ENCODE measurements at regions of chr14 and their contacts with region 1.

Region 1: GRCh38 chr14:93543766-93544165 is 113.0 kb downstream of the UNC79 start:
- DNase-seq: peak; percentile 5
- H3K4me3 ChIP-seq: no peak overlapping the region
- H3K27ac ChIP-seq: no peak overlapping the region
- H3K4me1 ChIP-seq: no peaks in the 10 kb centered on the region
- H3K27me3 ChIP-seq: no peaks in the 10 kb centered on the region
- CTCF ChIP-seq: peak; percentile 51

Region 2: DNA sequence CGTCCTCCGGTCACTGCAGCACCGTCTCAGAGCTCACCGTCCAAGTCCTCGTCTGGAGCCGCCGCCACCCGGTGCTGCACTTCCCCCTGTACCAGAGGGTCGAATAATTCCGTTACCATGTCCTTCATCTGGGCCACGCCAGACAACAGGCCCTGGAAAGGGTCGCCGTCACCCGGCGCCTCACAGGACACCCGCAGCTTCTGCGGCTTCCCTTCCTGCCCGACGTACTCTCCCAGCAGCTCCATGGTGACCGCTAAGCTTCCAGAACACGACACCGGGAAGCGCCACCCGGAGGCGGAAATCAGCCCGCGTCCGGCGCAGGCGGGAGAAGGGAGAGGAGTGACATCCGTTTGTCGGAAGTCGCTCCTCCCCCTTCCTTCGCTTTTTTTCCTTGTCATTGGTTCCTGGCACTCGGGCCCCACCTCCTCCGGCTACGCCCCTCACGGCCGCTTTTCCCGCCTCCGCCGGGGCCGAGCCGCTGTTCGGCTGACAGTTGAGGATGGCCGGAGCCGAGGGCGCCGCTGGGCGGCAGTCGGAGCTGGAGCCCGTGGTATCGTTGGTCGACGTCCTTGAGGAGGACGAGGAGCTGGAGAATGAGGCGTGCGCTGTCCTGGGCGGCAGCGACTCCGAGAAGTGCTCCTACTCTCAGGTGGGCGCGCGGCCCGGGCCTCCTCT is 336.8 kb before region 1 on chr14 and contains the starts of genes GON7 and UBR7:
- CTCF ChIA-PET with region 1: no interaction called
- dilution Hi-C with region 1: no loop called
- in situ Hi-C with region 1: no loop called
- intact Hi-C with region 1: loop called (anchors 1 kb)
- DNase-seq: peak; percentile 97
- H3K4me3 ChIP-seq: peak within 1 kb of the TSS; percentile 71 to 91 (median 82)
- H3K27ac ChIP-seq: peak within 1 kb of the TSS; percentile 73
- H3K4me1 ChIP-seq: peaks cover 18% of the 10 kb centered on the region
- H3K27me3 ChIP-seq: no peaks in the 10 kb centered on the region
- CTCF ChIP-seq: peak; percentile 11 to 39
- total RNA-seq, gene GON7: 7.2 to 9.3 TPM
- total RNA-seq, gene UBR7: 15.2 to 20.3 TPM

Region 3: DNA sequence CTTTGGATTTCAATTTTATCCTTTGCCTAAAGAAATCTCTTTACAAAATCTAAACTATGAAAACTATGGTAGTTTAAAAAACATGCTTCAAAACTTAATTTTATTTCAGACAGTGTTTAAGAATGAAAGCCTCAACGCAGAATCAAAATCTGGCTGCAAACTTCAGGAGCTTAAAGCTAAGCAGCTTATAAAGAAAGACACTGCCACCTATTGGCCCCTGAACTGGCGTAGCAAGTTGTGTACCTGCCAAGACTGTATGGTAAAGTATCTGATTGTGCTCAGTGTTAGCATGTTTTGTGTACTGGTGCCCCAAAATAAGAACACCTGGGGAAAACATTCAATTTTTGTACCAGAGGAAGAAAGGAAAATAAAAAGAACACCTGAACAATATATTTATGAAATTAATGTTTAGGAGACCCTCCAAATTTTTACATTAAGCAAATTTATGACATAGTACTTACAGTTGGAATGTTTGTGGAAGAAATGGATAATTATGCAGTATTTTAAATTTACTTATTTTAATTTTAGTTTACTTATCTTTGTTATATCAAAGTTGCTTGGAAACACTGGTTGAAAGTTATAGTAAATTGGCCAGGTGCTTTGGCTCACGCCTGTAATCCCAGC is 324.6 kb before region 1 on chr14:
- CTCF ChIA-PET with region 1: no interaction called
- dilution Hi-C with region 1: no loop called
- in situ Hi-C with region 1: loop called in 1 of 2 experiments (anchors 10 kb)
- intact Hi-C with region 1: no loop called
- DNase-seq: peak; percentile 51
- H3K4me3 ChIP-seq: no peak overlapping the region
- H3K27ac ChIP-seq: no peak overlapping the region
- H3K4me1 ChIP-seq: no peaks in the 10 kb centered on the region
- H3K27me3 ChIP-seq: no peaks in the 10 kb centered on the region
- CTCF ChIP-seq: peak; percentile 75 to 78

Region 4: GRCh38 chr14:93234798-93235197 is 309.0 kb before region 1 on chr14:
- CTCF ChIA-PET with region 1: no interaction called
- dilution Hi-C with region 1: no loop called
- in situ Hi-C with region 1: loop called in 1 of 2 experiments (anchors 10 kb)
- intact Hi-C with region 1: loop called (anchors 1 kb)
- DNase-seq: peak; percentile 79
- H3K4me3 ChIP-seq: no peak overlapping the region
- H3K27ac ChIP-seq: no peak overlapping the region
- H3K4me1 ChIP-seq: peaks cover 4% of the 10 kb centered on the region
- H3K27me3 ChIP-seq: no peaks in the 10 kb centered on the region
- CTCF ChIP-seq: no peak

Region 5: DNA sequence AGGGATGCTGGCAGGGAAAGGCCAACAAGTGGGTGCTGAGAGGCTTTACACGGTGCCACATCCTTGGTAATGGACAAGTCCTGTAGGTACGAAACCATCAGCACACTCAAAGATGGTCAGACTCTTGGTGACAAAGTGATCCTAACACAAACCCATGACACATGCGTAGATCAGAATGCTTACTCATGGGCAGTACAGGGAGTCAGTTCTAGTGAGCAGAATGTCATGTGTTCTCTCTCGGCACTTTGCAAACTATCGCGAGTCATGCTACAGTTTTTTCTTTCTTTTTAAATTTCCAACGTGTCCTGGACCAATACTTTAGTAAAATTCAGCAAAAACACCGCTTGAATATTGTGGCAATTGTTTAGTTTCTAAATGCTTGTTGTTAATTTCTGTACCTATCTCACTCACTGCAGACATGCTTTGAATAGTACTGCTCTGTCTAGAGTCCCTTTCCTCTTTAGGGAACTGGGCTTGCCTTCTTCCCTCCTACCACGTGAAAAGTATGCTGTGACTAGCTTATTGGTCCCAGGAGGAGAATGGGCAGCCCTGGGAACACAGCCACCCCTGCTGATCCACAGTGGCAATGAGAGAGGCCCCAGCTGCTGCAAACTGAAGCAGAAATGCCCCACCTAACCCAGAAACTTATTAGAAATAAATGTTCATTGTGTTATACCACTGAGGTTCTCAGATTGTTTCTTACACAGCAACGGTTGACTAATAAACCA is 274.3 kb before region 1 on chr14:
- CTCF ChIA-PET with region 1: no interaction called
- dilution Hi-C with region 1: no loop called
- in situ Hi-C with region 1: loop called in 1 of 2 experiments (anchors 25 kb)
- intact Hi-C with region 1: no loop called
- DNase-seq: peak; percentile 46
- H3K4me3 ChIP-seq: no peak overlapping the region
- H3K27ac ChIP-seq: no peak overlapping the region
- H3K4me1 ChIP-seq: peaks cover 4% of the 10 kb centered on the region
- H3K27me3 ChIP-seq: no peaks in the 10 kb centered on the region
- CTCF ChIP-seq: no peak

Region 6: DNA sequence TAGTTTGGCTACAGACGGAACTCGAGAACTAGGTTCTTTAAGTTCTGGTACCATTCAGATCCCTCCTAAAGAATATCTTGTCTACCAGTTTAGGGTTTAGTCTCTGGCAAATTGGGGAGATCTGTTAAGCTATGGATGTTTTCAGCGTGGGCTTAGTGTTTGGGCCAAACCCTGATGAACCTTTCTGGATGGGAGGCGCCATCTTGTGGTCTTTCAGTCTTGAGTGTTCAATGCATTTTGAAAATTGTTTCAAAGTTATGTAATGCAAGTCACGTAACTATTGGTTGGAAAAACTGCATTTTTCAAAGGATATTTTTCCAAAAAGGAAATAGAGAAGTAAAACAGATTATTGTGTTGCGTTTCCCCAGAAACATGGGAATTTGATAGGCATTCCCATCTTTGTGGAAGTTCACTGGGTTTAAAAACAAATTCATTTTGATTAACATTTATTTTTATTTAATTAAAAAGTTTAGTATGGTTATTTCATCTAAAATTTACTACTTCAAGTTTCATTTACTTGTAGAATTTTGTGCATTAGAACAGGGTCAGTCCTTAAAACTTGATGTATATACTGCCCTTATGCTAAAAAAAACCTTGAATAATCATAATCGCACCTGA is 75.5 kb after region 1 on chr14:
- CTCF ChIA-PET with region 1: no interaction called
- dilution Hi-C with region 1: no loop called
- in situ Hi-C with region 1: no loop called
- intact Hi-C with region 1: loop called (anchors 5 kb)
- DNase-seq: peak; percentile 14
- H3K4me3 ChIP-seq: no peak overlapping the region
- H3K27ac ChIP-seq: no peak overlapping the region
- H3K4me1 ChIP-seq: no peaks in the 10 kb centered on the region
- H3K27me3 ChIP-seq: no peaks in the 10 kb centered on the region
- CTCF ChIP-seq: peak; percentile 58 to 71

Region 7: GRCh38 chr14:93880021-93880820 is 336.5 kb after region 1 on chr14:
- CTCF ChIA-PET with region 1: no interaction called
- dilution Hi-C with region 1: no loop called
- in situ Hi-C with region 1: no loop called
- intact Hi-C with region 1: no loop called
- DNase-seq: no peak
- H3K4me3 ChIP-seq: peak overlapping the region in 1 of 3 experiments; percentile 8
- H3K27ac ChIP-seq: no peak overlapping the region
- H3K4me1 ChIP-seq: no peaks in the 10 kb centered on the region
- H3K27me3 ChIP-seq: no peaks in the 10 kb centered on the region
- CTCF ChIP-seq: no peak